CD4-positive, alpha-beta memory T cell (primary cell): ENCODE measurements at regions of chr5 and their contacts with region 1.

Region 1: DNA sequence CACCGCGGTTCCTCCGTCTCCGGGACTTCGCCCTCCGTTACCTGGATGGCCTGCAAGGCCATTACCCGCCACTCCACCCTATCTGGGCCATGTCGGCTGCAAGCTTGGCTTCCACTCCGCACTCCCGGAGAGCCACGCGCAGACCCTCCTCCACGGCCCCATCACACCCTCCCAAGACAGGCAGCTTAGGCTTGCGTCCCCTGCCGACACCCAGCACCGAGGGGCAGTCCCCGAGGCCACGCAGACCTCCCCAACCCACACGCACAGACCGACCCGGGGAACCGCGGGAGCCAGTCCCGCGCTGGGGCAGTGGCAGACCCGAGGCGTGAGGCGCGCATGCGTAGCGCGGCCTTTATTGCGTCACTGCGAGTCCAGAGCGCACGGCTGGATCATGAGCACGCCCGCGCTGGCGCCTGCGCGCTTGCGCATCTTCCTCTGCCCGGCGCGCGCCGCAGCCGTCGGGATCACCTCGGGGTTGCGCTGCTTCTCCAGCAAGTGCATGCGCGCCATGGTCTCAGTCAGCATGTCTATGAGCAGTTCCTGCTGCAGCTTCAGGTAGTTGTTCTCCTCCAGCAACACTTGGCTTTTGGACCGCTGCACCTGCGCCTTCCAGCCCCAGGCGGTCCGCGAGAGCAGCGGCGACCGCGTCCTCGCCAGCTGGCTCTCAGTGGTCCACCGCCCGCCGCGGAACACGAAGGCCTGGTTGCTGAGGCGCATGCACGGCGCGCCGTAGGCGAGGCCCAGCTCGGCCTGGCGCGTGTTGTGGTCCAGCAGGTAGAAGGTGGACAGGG is 2.4 kb downstream of the CBY3 start:
- DNase-seq: peak; percentile 93 to 95 (median 93)
- H3K4me3 ChIP-seq: peak overlapping the region; percentile 73 to 98
- H3K4me3 Mint-ChIP-seq: peak overlapping the region; percentile 96 to 99 (median 96)
- H3K27ac ChIP-seq: peak overlapping the region; percentile 83
- H3K27ac Mint-ChIP-seq: peak overlapping the region; percentile 95 to 98 (median 98)
- H3K4me1 ChIP-seq: peaks cover 28% of the 10 kb centered on the region
- H3K4me1 Mint-ChIP-seq: peaks cover 21 to 51% (median 31%) of the 10 kb centered on the region in 4 donors
- H3K27me3 ChIP-seq: no peaks in the 10 kb centered on the region
- H3K27me3 Mint-ChIP-seq: no peaks in the 10 kb centered on the region

Region 2: DNA sequence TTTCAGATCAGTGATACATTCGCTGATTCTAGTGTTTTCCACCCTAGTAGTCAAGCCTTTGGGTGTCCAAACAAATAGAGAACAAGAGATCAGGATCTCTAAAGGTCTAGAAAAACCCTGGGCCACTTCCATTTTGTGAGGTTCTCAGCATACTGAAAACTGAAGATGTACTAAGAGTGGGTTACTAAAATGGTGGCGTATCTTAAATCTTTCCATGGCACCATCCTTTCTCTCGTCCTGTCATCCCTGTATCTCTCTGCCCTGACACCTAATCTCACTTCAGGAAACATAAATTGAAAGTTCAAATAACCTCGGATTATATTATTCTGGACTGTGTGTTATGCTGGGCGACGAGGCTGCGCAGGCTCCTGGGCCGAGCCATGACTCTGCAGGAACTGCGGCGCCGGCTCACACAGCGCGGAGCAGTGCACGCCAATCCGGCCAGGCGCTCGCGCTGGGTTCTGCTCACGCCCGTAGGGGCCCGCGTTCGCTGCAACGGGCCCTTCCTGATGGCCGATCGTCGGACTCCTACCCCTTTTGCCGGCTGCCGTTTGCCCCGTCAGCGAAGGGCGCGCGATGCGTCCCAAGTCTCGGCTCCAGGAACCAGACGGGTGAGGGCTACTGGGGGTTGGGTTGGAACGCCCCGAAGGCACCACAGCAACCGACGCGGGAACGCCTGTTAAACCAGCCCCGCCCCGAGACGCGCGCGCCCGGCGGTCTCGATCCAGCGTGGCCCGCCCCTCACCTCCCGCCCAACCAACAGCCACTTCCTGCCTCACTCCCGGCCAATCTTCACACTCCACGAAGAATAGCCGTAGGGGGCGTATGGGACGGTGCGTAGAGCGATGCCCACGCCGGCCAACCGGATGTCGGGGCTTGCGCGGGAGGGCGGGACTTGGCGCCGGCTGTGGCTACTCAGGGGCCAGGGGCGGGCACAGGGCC is 19.8 kb after region 1 on chr5:
- CTCF ChIA-PET with region 1: interaction called, 23 read pairs
- POLR2A ChIA-PET with region 1: interaction called, 18 read pairs
- intact Hi-C with region 1: loop called (anchors 1 kb)
- DNase-seq: peak; percentile 99
- H3K4me3 ChIP-seq: peak overlapping the region; percentile 76 to 93
- H3K4me3 Mint-ChIP-seq: peak overlapping the region; percentile 91 to 97 (median 95)
- H3K27ac ChIP-seq: peak overlapping the region; percentile 95
- H3K27ac Mint-ChIP-seq: peak overlapping the region; percentile 97 to 100 (median 99)
- H3K4me1 ChIP-seq: peaks cover 46% of the 10 kb centered on the region
- H3K4me1 Mint-ChIP-seq: peaks cover 24 to 63% (median 42%) of the 10 kb centered on the region in 4 donors
- H3K27me3 ChIP-seq: no peaks in the 10 kb centered on the region
- H3K27me3 Mint-ChIP-seq: no peaks in the 10 kb centered on the region

Region 3: GRCh38 chr5:179795863-179796833 is 117.7 kb after region 1 on chr5:
- CTCF ChIA-PET with region 1: interaction called, 3 read pairs
- POLR2A ChIA-PET with region 1: interaction called, 7 read pairs
- intact Hi-C with region 1: loop called (anchors 2 kb)
- DNase-seq: peak; percentile 61 to 77 (median 68)
- H3K4me3 ChIP-seq: peak overlapping the region; percentile 23 to 69
- H3K4me3 Mint-ChIP-seq: peak overlapping the region; percentile 50 to 79 (median 64)
- H3K27ac ChIP-seq: peak overlapping the region; percentile 44
- H3K27ac Mint-ChIP-seq: peak overlapping the region in 6 of 7 donors; percentile 11 to 89 (median 57)
- H3K4me1 ChIP-seq: peaks cover 25% of the 10 kb centered on the region
- H3K4me1 Mint-ChIP-seq: peaks cover 11 to 51% (median 27%) of the 10 kb centered on the region in 4 donors
- H3K27me3 ChIP-seq: no peaks in the 10 kb centered on the region
- H3K27me3 Mint-ChIP-seq: no peaks in the 10 kb centered on the region

Region 4: GRCh38 chr5:179907570-179908324 is 229.3 kb after region 1 on chr5 and contains the start of gene TBC1D9B:
- CTCF ChIA-PET with region 1: no interaction called
- POLR2A ChIA-PET with region 1: interaction called, 3 read pairs
- intact Hi-C with region 1: loop called (anchors 5 kb)
- DNase-seq: peak; percentile 76 to 82 (median 78)
- H3K4me3 ChIP-seq: peak within 1 kb of the TSS in 1 of 2 donors; percentile 57
- H3K4me3 Mint-ChIP-seq: peak within 1 kb of the TSS; percentile 85 to 92 (median 88)
- H3K27ac ChIP-seq: peak within 1 kb of the TSS; percentile 54
- H3K27ac Mint-ChIP-seq: peak within 1 kb of the TSS; percentile 78 to 94 (median 84)
- H3K4me1 ChIP-seq: peaks cover 23% of the 10 kb centered on the region
- H3K4me1 Mint-ChIP-seq: peaks cover 7 to 38% (median 15%) of the 10 kb centered on the region in 4 donors
- H3K27me3 ChIP-seq: no peaks in the 10 kb centered on the region
- H3K27me3 Mint-ChIP-seq: no peaks in the 10 kb centered on the region
- total RNA-seq, gene TBC1D9B: 84.3 to 85.0 TPM